HepG2 (cell line): ENCODE measurements at regions of chr7 and their contacts with region 1.

Region 1: DNA sequence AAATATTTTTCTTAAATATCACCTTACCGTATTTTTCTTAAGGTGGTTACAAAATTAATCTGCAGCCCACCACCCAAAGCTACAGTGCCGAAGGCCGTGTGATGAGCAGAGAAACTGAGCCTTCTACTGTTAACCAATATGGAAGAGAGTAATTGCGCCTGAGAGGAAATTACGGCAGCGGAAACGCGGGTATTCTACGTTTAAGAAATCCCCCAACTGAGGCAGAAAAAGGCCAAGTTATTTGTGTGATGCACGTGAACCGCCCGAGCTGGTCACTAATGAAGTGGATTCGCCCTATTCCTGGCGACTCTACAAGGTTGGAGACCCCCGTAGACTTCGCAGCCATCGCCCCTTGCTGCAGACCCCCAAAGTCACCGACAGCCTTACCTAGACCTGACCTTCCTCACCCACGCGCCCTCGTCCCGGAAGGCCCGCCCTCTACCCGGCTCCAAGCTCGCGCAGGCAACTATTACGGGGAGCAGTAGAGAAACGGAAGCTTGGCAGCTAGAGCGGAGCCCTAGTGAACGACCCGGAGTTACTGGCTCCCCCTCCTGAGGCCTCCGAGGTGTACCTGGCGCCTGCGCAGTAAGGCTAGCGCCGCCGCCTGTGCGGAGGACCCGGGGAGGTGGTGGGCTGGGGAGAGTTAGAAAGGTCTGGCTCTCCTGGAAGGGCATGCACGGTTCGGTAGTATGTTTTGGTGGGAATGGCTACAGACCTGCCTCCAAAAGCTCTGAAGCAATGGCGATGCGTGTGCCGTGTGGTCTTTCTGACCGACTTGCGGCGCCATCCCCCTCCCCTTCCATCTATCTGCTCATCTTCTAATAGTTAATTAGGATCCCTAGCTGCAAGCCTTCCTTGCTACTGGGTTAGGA is at the start of gene MRPS33:
- DNase-seq: peak; percentile 95
- ATAC-seq: peak; percentile 99
- H3K4me3 ChIP-seq: peak within 1 kb of the TSS; percentile 84 to 88 (median 87)
- H3K27ac ChIP-seq: peak within 1 kb of the TSS; percentile 82
- H3K4me1 ChIP-seq: peaks cover 30% of the 10 kb centered on the region
- H3K27me3 ChIP-seq: no peaks in the 10 kb centered on the region; a peak in 1 of 5 replicates
- CTCF ChIP-seq: peak; percentile 98
- EP300 ChIP-seq: peak; percentile 39 to 48; a peak in 3 of 4 replicates
- POLR2A ChIP-seq: peak; percentile 92 to 97
- RAD21 ChIP-seq: no peak; the same call in none of the 2 replicates
- total RNA-seq, gene MRPS33: 91.0 and 120 TPM in 2 replicates

Region 2: GRCh38 chr7:140653319-140654108 is 361.2 kb before region 1 on chr7:
- CTCF ChIA-PET with region 1: no interaction called
- POLR2A ChIA-PET with region 1: no interaction called
- in situ Hi-C with region 1: no loop called
- intact Hi-C with region 1: loop called (anchors 10 kb)
- DNase-seq: peak; percentile 61
- ATAC-seq: peak; percentile 76
- H3K4me3 ChIP-seq: no peak overlapping the region
- H3K27ac ChIP-seq: no peak overlapping the region
- H3K4me1 ChIP-seq: peaks cover 26% of the 10 kb centered on the region
- H3K27me3 ChIP-seq: peaks cover 0 to 14% of the 10 kb centered on the region in 2 experiments; a peak in 3 of 5 replicates
- CTCF ChIP-seq: peak; percentile 93
- EP300 ChIP-seq: no peak
- POLR2A ChIP-seq: no peak
- RAD21 ChIP-seq: peak; percentile 85

Region 3: GRCh38 chr7:140726281-140726680 is 288.5 kb before region 1 on chr7:
- CTCF ChIA-PET with region 1: no interaction called
- POLR2A ChIA-PET with region 1: no interaction called
- in situ Hi-C with region 1: no loop called
- intact Hi-C with region 1: loop called (anchors 2 kb)
- DNase-seq: peak; percentile 10
- ATAC-seq: peak; percentile 30; the same call in 1 of the 3 replicates
- H3K4me3 ChIP-seq: no peak overlapping the region
- H3K27ac ChIP-seq: no peak overlapping the region
- H3K4me1 ChIP-seq: no peaks in the 10 kb centered on the region
- H3K27me3 ChIP-seq: no peaks in the 10 kb centered on the region
- CTCF ChIP-seq: peak; percentile 42
- EP300 ChIP-seq: no peak
- POLR2A ChIP-seq: no peak
- RAD21 ChIP-seq: no peak

Region 4: GRCh38 chr7:140924019-140924820 is 90.5 kb before region 1 on chr7:
- CTCF ChIA-PET with region 1: no interaction called
- POLR2A ChIA-PET with region 1: interaction called, 4 read pairs
- in situ Hi-C with region 1: no loop called
- intact Hi-C with region 1: loop called (anchors 5 kb)
- DNase-seq: peak; percentile 65
- ATAC-seq: peak; percentile 89
- H3K4me3 ChIP-seq: peak overlapping the region; percentile 84 to 92 (median 90)
- H3K27ac ChIP-seq: peak overlapping the region; percentile 97
- H3K4me1 ChIP-seq: peaks cover 45% of the 10 kb centered on the region
- H3K27me3 ChIP-seq: no peaks in the 10 kb centered on the region; a peak in 1 of 5 replicates
- CTCF ChIP-seq: peak; percentile 82
- EP300 ChIP-seq: no peak
- POLR2A ChIP-seq: peak in 1 of 2 experiments; percentile 46; a peak in 3 of 4 replicates
- RAD21 ChIP-seq: peak; percentile 38; the same call in 1 of the 2 replicates

Region 5: GRCh38 chr7:141304291-141304690 is 289.5 kb after region 1 on chr7:
- CTCF ChIA-PET with region 1: no interaction called
- POLR2A ChIA-PET with region 1: no interaction called
- in situ Hi-C with region 1: no loop called
- intact Hi-C with region 1: no loop called
- DNase-seq: no peak
- ATAC-seq: no peak
- H3K4me3 ChIP-seq: no peak overlapping the region
- H3K27ac ChIP-seq: no peak overlapping the region
- H3K4me1 ChIP-seq: no peaks in the 10 kb centered on the region
- H3K27me3 ChIP-seq: peaks cover 0 to 5% of the 10 kb centered on the region in 2 experiments; a peak in 2 of 5 replicates
- CTCF ChIP-seq: no peak
- EP300 ChIP-seq: no peak
- POLR2A ChIP-seq: no peak
- RAD21 ChIP-seq: no peak

Region 6: GRCh38 chr7:141654551-141654950 is 639.8 kb after region 1 on chr7:
- CTCF ChIA-PET with region 1: no interaction called
- POLR2A ChIA-PET with region 1: no interaction called
- in situ Hi-C with region 1: no loop called
- intact Hi-C with region 1: loop called (anchors 5 kb)
- DNase-seq: peak; percentile 70
- ATAC-seq: peak; percentile 94
- H3K4me3 ChIP-seq: no peak overlapping the region
- H3K27ac ChIP-seq: no peak overlapping the region
- H3K4me1 ChIP-seq: no peaks in the 10 kb centered on the region
- H3K27me3 ChIP-seq: no peaks in the 10 kb centered on the region
- CTCF ChIP-seq: peak; percentile 89
- EP300 ChIP-seq: no peak
- POLR2A ChIP-seq: no peak
- RAD21 ChIP-seq: peak; percentile 62; the same call in 1 of the 2 replicates